Activated CD4-positive, alpha-beta T cell treated with anti-CD3 and anti-CD28 coated beads for 36 hours (primary cell): ENCODE measurements at regions of chr5 and their contacts with region 1.

Region 1: DNA sequence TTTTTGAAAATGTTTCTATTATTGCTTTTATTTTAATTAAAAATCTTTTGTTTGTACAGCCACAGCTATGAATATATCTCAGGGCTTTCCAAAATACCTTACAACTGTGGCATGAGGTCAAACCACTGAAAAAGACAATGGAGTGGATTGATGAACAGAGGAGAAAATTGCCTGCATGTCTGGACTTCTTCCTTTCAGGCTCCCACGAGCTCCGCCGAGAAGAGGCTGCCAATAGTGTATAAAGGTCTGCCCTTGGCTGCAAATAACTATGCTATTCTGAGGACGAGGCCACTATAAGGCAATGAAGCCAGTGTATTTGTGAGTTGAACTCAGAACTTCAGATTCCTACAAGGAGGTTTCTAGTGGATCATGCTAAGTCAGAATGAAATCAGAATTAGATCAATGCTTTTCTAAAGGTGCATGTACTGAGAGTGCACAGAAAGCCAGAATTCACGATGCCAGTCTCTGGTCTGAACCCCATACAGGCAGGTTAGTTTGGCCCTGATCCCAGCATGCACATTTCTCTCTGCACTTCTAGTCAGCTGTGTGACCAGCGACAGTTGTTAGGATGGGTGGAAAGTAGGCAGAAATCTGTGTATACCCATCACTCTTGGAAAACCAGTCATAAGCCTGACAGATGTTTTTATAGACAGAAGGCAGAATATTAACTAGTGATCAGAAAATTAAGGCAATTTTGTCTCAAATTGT is 42.7 kb upstream of the PLPP1 start:
- DNase-seq: no peak
- ATAC-seq: no peak
- H3K4me3 Mint-ChIP-seq: no peak overlapping the region
- H3K27ac Mint-ChIP-seq: no peak overlapping the region
- H3K4me1 Mint-ChIP-seq: peaks cover 21% of the 10 kb centered on the region
- H3K27me3 Mint-ChIP-seq: no peaks in the 10 kb centered on the region

Region 2: GRCh38 chr5:55591686-55592085 is 14.2 kb after region 1 on chr5:
- CTCF ChIA-PET with region 1: interaction called, 3 read pairs
- POLR2A ChIA-PET with region 1: no interaction called
- intact Hi-C with region 1: loop called in 1 of 2 experiments (anchors 2 kb)
- DNase-seq: no peak
- ATAC-seq: no peak
- H3K4me3 Mint-ChIP-seq: no peak overlapping the region
- H3K27ac Mint-ChIP-seq: peak overlapping the region; percentile 84
- H3K4me1 Mint-ChIP-seq: peaks cover 19% of the 10 kb centered on the region
- H3K27me3 Mint-ChIP-seq: no peaks in the 10 kb centered on the region

Region 3: GRCh38 chr5:57540823-57541222 is 1963.3 kb after region 1 on chr5:
- CTCF ChIA-PET with region 1: no interaction called
- POLR2A ChIA-PET with region 1: no interaction called
- intact Hi-C with region 1: loop called in 1 of 2 experiments (anchors 10 kb)
- DNase-seq: no peak
- ATAC-seq: no peak
- H3K4me3 Mint-ChIP-seq: no peak overlapping the region
- H3K27ac Mint-ChIP-seq: no peak overlapping the region
- H3K4me1 Mint-ChIP-seq: peaks cover 8% of the 10 kb centered on the region
- H3K27me3 Mint-ChIP-seq: no peaks in the 10 kb centered on the region